Esophagus muscularis mucosa (tissue), 4 donors: ENCODE measurements at regions of chr19 and their contacts with region 1.

Region 1: GRCh38 chr19:44093931-44094765 is at the start of gene ZNF224:
- DNase-seq: peak; percentile 97
- H3K4me3 ChIP-seq: peak within 1 kb of the TSS; percentile 59 to 76 (median 72)
- H3K27ac ChIP-seq: peak within 1 kb of the TSS; percentile 68 to 79 (median 78)
- H3K4me1 ChIP-seq: peaks cover 7 to 22% (median 17%) of the 10 kb centered on the region in 4 donors
- H3K27me3 ChIP-seq: no peaks in the 10 kb centered on the region
- CTCF ChIP-seq: no peak
- EP300 ChIP-seq: no peak
- POLR2A ChIP-seq: no peak
- total RNA-seq, gene ZNF224: 12.4 to 28.7 (median 16.2) TPM

Region 2: GRCh38 chr19:44071824-44072542 is 22.2 kb before region 1 on chr19 and contains the start of gene ZNF284:
- intact Hi-C with region 1: loop called (anchors 2 kb)
- DNase-seq: peak; percentile 96
- H3K4me3 ChIP-seq: peak within 1 kb of the TSS; percentile 54 to 75 (median 74)
- H3K27ac ChIP-seq: peak within 1 kb of the TSS; percentile 53 to 70 (median 66)
- H3K4me1 ChIP-seq: peaks cover 13 to 20% (median 16%) of the 10 kb centered on the region in 4 donors
- H3K27me3 ChIP-seq: no peaks in the 10 kb centered on the region
- CTCF ChIP-seq: no peak
- EP300 ChIP-seq: no peak
- POLR2A ChIP-seq: no peak
- total RNA-seq, gene ZNF284: 1.3 to 2.9 (median 2.5) TPM

Region 3: GRCh38 chr19:44356383-44357111 is 262.4 kb after region 1 on chr19 and contains the start of gene ZNF112:
- intact Hi-C with region 1: loop called (anchors 5 kb)
- DNase-seq: peak; percentile 94
- H3K4me3 ChIP-seq: peak within 1 kb of the TSS; percentile 59 to 70 (median 62)
- H3K27ac ChIP-seq: peak within 1 kb of the TSS; percentile 53 to 71 (median 67)
- H3K4me1 ChIP-seq: peaks cover 9 to 15% (median 12%) of the 10 kb centered on the region in 4 donors
- H3K27me3 ChIP-seq: no peaks in the 10 kb centered on the region
- CTCF ChIP-seq: peak in 1 of 3 experiments; percentile 7
- EP300 ChIP-seq: no peak
- POLR2A ChIP-seq: no peak
- total RNA-seq, gene ZNF112: 2.7 to 6.6 (median 4.2) TPM